ENCODE measurements at regions of chr9 and their contacts with region 1.

Region 1: DNA sequence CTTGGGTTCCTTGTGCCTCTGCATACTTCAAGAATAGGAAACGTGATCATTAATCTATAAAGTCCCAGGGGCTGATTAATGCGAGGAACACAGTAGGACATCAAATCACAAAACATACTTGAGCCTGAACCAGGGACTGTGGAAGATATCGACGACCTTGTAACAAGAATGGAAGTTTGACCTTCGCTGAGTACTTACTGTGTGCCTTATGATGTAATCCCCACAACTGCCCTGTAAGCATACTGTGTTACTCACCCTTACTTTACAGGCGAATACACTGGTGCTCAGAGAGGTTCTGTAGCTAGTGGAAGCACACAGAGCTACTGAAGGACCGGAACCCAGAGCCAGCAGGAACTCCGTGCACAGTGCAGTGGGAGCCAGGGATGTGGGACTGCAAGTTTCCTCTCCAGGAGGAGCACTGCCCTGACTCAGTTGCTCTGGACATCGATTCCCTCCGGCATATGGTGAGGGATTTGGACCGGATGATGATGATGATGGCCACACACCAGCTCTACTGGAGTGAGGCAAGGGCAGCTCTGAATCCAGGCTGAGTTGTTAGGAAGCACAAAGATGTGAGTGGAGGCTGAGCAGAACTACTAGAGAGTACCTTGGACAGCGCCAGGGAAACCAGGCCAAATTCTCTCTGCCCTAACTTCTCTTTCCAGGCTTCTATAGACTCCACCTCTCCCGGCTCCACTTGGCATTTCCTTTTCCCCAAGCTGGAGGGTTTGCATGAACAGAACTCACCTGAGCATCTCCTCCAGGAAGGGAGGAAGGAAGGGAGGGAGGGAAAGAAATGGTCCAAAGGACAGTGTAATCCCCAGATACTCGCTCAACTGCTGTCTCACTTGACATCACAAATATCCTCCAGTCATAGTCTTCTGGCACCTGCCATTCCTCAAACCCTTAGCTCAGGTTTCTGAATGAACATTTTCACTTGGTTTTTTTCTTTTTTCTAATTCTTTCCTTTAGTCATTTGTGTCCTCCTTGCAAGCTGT is 1.5 kb upstream of the GABBR2 start:
- DNase-seq: peak in 1 of 6 donors; percentile 24
- ATAC-seq: peak in 2 of 4 donors; percentile 45 to 61
- H3K4me3 ChIP-seq: no peak overlapping the region
- H3K27ac ChIP-seq: no peak overlapping the region
- H3K4me1 ChIP-seq: peaks cover 0 to 6% (median 0%) of the 10 kb centered on the region in 3 donors
- H3K27me3 ChIP-seq: peaks cover 0 to 5% (median 2%) of the 10 kb centered on the region in 4 donors
- CTCF ChIP-seq: no peak

Region 2: GRCh38 chr9:98533132-98533531 is 177.1 kb before region 1 on chr9:
- intact Hi-C with region 1: loop called in 1 of 3 experiments (anchors 5 kb)
- DNase-seq: no peak
- ATAC-seq: no peak
- H3K4me3 ChIP-seq: no peak overlapping the region
- H3K27ac ChIP-seq: no peak overlapping the region
- H3K4me1 ChIP-seq: no peaks in the 10 kb centered on the region
- H3K27me3 ChIP-seq: no peaks in the 10 kb centered on the region
- CTCF ChIP-seq: no peak

Region 3: GRCh38 chr9:98791147-98792095 is 81.2 kb after region 1 on chr9:
- intact Hi-C with region 1: no loop called
- DNase-seq: peak; percentile 66 to 93 (median 82)
- ATAC-seq: peak; percentile 84 to 93 (median 91)
- H3K4me3 ChIP-seq: no peak overlapping the region
- H3K27ac ChIP-seq: peak overlapping the region in 1 of 4 donors; percentile 33
- H3K4me1 ChIP-seq: peaks cover 0 to 12% (median 0%) of the 10 kb centered on the region in 3 donors
- H3K27me3 ChIP-seq: no peaks in the 10 kb centered on the region
- CTCF ChIP-seq: peak; percentile 96 to 98 (median 96)

Measured in pancreas (tissue), 10 donors.